Transverse colon (tissue), 4 donors: ENCODE measurements at regions of chr3 and their contacts with region 1.

Region 1: GRCh38 chr3:86969500-86970189 is 21.3 kb downstream of the VGLL3 start:
- DNase-seq: no peak
- H3K4me3 ChIP-seq: no peak overlapping the region
- H3K27ac ChIP-seq: no peak overlapping the region
- H3K4me1 ChIP-seq: no peaks in the 10 kb centered on the region
- H3K27me3 ChIP-seq: no peaks in the 10 kb centered on the region
- CTCF ChIP-seq: peak; percentile 37 to 61 (median 55)
- EP300 ChIP-seq: no peak
- POLR2A ChIP-seq: no peak

Region 2: GRCh38 chr3:88167704-88168103 is 1198.1 kb after region 1 on chr3:
- in situ Hi-C with region 1: no loop called
- intact Hi-C with region 1: loop called (anchors 10 kb)
- DNase-seq: no peak
- H3K4me3 ChIP-seq: no peak overlapping the region
- H3K27ac ChIP-seq: no peak overlapping the region
- H3K4me1 ChIP-seq: no peaks in the 10 kb centered on the region
- H3K27me3 ChIP-seq: no peaks in the 10 kb centered on the region
- CTCF ChIP-seq: no peak
- EP300 ChIP-seq: no peak
- POLR2A ChIP-seq: no peak